Activated CD4-positive, alpha-beta T cell treated with anti-CD3 and anti-CD28 coated beads, Interleukin-2, amount 10 ng/mL, durations not matched to agents 7 days and 5 days (primary cell): ENCODE measurements at regions of chr6 and their contacts with region 1.

Region 1: GRCh38 chr6:33288921-33289748 is at the starts of genes PFDN6 and WDR46:
- DNase-seq: peak; percentile 90
- H3K4me3 Mint-ChIP-seq: peak within 1 kb of the TSS; percentile 96
- H3K27ac Mint-ChIP-seq: peak within 1 kb of the TSS; percentile 82
- H3K4me1 Mint-ChIP-seq: peaks cover 44% of the 10 kb centered on the region
- H3K27me3 Mint-ChIP-seq: no peaks in the 10 kb centered on the region
- total RNA-seq, gene PFDN6: 57.0 to 67.2 TPM
- total RNA-seq, gene WDR46: 53.4 to 54.8 TPM

Region 2: GRCh38 chr6:33271458-33272274 is 17.5 kb before region 1 on chr6 and contains the starts of genes RPS18 and VPS52:
- CTCF ChIA-PET with region 1: interaction called, 19 read pairs
- POLR2A ChIA-PET with region 1: interaction called, 11 read pairs
- DNase-seq: peak; percentile 96
- H3K4me3 Mint-ChIP-seq: peak within 1 kb of the TSS; percentile 95
- H3K27ac Mint-ChIP-seq: peak within 1 kb of the TSS; percentile 98
- H3K4me1 Mint-ChIP-seq: peaks cover 61% of the 10 kb centered on the region
- H3K27me3 Mint-ChIP-seq: no peaks in the 10 kb centered on the region
- total RNA-seq, gene RPS18: 2,438 to 3,135 TPM
- total RNA-seq, gene VPS52: 79.1 to 84.0 TPM

Region 3: GRCh38 chr6:33276864-33277662 is 12.1 kb before region 1 on chr6 and contains the start of gene B3GALT4:
- CTCF ChIA-PET with region 1: interaction called, 19 read pairs
- POLR2A ChIA-PET with region 1: interaction called, 11 read pairs
- DNase-seq: peak; percentile 79
- H3K4me3 Mint-ChIP-seq: peak within 1 kb of the TSS; percentile 95
- H3K27ac Mint-ChIP-seq: peak within 1 kb of the TSS; percentile 97
- H3K4me1 Mint-ChIP-seq: peaks cover 69% of the 10 kb centered on the region
- H3K27me3 Mint-ChIP-seq: no peaks in the 10 kb centered on the region
- total RNA-seq, gene B3GALT4: 18.3 to 21.5 TPM